T-cell (primary cell): ENCODE measurements at regions of chr14 and their contacts with region 1.

Region 1: DNA sequence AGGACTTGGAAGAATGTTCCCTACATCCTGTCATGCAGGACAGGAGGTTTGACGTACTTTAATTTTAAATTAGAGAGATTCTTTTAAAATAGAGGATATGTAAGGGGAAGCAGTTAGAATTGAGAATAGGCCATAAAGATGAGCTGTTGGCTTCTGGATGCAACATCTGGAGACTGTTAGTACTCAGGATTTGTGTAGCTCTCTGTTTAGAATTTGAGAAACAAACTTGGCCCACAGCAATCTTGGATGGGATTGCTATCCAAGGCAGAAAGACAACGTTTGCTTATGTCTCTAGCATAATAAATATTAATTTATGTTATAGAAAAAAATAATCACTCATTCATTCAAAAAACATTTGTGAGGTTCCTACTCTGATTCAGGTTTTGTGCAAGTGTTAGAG is 398.4 kb upstream of the NOVA1 start:
- DNase-seq: no peak
- ATAC-seq: no peak
- H3K4me3 ChIP-seq: no peak overlapping the region
- H3K4me3 Mint-ChIP-seq: no peak overlapping the region
- H3K27ac ChIP-seq: no peak overlapping the region
- H3K27ac Mint-ChIP-seq: no peak overlapping the region
- H3K4me1 ChIP-seq: no peaks in the 10 kb centered on the region
- H3K4me1 Mint-ChIP-seq: no peaks in the 10 kb centered on the region
- H3K27me3 ChIP-seq: no peaks in the 10 kb centered on the region
- H3K27me3 Mint-ChIP-seq: no peaks in the 10 kb centered on the region

Region 2: DNA sequence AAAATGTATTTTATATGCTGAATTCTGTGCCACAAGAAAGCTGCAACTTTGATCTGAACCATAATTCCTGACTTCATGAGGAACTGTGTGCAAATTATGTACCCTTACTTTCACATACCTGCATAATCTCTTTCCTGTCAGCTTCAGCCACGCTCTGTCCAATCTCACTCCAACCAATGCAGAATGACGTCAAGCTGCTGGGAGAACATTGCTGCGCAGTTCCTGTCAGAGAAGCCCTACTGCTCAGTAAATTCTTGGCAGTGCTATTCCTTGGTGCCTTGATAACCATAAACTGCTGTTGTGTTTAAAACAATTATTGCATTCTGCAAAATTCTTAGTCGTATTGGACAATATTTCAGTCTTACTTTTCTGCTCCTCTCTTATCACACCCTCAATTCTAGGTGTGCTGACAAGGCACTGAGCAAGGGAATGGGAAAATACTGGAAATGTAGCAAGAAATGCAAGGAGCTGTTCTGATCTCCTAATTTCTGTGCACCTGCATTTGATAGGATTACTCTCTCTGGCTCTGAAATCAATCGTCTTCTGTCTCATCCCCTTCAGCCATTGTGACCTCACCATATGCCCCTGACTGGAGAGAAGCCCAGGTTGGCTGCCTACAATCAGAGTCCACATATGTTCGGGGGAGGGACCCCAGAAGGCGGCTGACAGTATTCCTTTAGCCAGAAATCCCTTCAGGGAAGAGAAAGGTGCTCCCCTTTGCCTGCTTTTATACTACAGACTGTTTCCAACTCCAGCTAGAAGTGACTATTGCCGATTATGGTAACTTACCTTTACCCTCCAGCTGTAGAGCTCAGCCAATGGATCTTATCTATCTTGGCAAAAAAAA is 123.5 kb before region 1 on chr14:
- CTCF ChIA-PET with region 1: no interaction called
- POLR2A ChIA-PET with region 1: no interaction called
- DNase-seq: no peak
- ATAC-seq: no peak
- H3K4me3 ChIP-seq: no peak overlapping the region
- H3K4me3 Mint-ChIP-seq: no peak overlapping the region
- H3K27ac ChIP-seq: no peak overlapping the region
- H3K27ac Mint-ChIP-seq: no peak overlapping the region
- H3K4me1 ChIP-seq: no peaks in the 10 kb centered on the region
- H3K4me1 Mint-ChIP-seq: no peaks in the 10 kb centered on the region
- H3K27me3 ChIP-seq: no peaks in the 10 kb centered on the region
- H3K27me3 Mint-ChIP-seq: no peaks in the 10 kb centered on the region

Region 3: DNA sequence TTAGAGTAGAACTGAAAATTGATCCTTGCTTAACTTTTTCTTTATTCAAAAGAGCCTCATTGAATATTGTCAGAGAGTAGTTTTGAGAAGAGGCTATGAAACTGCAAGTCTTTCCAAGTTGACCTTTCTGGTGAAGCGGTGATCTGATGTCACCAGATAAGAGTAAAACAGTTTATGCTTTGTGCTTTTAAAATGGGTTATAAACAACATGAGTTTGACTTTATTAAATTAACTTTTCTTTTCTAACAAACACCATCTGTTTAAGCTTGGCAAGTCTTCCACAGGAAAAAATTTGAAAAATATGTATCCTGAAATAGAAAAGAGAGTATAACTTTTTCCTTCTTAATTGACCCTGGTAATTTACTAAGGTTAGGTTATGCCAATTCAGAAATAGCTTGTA is 10.3 kb after region 1 on chr14:
- CTCF ChIA-PET with region 1: interaction called in 1 of 2 experiments, 12 read pairs
- POLR2A ChIA-PET with region 1: no interaction called
- DNase-seq: no peak
- ATAC-seq: no peak
- H3K4me3 ChIP-seq: no peak overlapping the region
- H3K4me3 Mint-ChIP-seq: no peak overlapping the region
- H3K27ac ChIP-seq: no peak overlapping the region
- H3K27ac Mint-ChIP-seq: no peak overlapping the region
- H3K4me1 ChIP-seq: no peaks in the 10 kb centered on the region
- H3K4me1 Mint-ChIP-seq: no peaks in the 10 kb centered on the region
- H3K27me3 ChIP-seq: no peaks in the 10 kb centered on the region
- H3K27me3 Mint-ChIP-seq: no peaks in the 10 kb centered on the region

Region 4: GRCh38 chr14:27026097-27026496 is 29.9 kb after region 1 on chr14:
- CTCF ChIA-PET with region 1: no interaction called
- POLR2A ChIA-PET with region 1: no interaction called
- DNase-seq: no peak
- ATAC-seq: no peak
- H3K4me3 ChIP-seq: no peak overlapping the region
- H3K4me3 Mint-ChIP-seq: no peak overlapping the region
- H3K27ac ChIP-seq: no peak overlapping the region
- H3K27ac Mint-ChIP-seq: no peak overlapping the region
- H3K4me1 ChIP-seq: no peaks in the 10 kb centered on the region
- H3K4me1 Mint-ChIP-seq: no peaks in the 10 kb centered on the region
- H3K27me3 ChIP-seq: no peaks in the 10 kb centered on the region
- H3K27me3 Mint-ChIP-seq: no peaks in the 10 kb centered on the region